ENCODE measurements at regions of chr17 and their contacts with region 1.

Region 1: DNA sequence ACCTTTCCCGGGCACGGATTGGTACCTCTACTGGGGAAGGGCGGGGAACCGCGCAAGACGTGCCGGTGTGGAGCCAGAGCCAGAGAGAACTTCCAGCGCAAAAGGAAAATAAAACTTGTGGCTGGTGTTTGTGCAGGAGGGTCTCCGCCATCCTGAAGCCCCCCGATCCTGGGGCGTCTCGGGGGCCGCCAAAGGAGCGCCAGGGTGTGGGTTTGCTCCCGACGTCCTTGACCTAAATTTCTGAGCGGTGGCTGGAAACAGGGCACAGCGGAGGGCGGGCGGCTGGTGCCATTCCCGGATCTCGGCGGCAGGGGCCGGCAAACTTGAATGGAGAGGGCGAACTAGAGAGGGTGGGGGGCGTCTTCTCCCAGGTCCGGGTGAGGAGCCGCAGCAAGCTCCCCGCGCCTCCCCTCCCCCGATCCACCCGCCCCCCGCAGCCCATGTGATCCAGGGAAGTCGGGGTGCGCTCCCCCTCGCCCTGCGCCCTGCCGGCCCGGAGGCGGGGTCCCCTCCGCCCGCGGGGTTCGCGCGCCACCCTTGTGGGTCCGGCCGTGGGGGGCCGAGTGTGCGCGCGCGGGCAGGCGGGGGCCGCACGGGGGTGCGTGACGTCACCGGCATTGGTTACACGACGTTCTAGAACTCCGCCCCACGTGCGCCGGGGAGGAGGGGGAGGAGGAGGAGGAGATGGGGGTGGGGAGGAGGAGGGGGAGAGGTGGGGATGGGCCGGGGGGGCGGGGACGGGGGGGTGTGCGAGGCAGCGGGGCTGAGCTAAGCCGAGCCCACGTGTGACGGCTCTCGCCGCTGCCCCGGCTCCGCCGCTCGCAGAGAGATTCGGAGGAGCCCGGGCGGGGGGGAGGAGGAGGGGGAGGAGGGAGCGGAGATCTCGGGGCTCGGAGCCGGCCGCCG is at the start of gene MSI2:
- DNase-seq: peak; percentile 93 to 96
- H3K4me3 ChIP-seq: peak within 1 kb of the TSS; percentile 82 to 91 (median 90)
- H3K27ac ChIP-seq: peak within 1 kb of the TSS; percentile 87 to 97 (median 94)
- H3K4me1 ChIP-seq: peaks cover 10 to 42% (median 26%) of the 10 kb centered on the region in 4 donors
- H3K27me3 ChIP-seq: no peaks in the 10 kb centered on the region
- CTCF ChIP-seq: no peak
- EP300 ChIP-seq: peak; percentile 32
- POLR2A ChIP-seq: no peak
- total RNA-seq, gene MSI2: 11.7 to 72.4 (median 30.8) TPM

Region 2: DNA sequence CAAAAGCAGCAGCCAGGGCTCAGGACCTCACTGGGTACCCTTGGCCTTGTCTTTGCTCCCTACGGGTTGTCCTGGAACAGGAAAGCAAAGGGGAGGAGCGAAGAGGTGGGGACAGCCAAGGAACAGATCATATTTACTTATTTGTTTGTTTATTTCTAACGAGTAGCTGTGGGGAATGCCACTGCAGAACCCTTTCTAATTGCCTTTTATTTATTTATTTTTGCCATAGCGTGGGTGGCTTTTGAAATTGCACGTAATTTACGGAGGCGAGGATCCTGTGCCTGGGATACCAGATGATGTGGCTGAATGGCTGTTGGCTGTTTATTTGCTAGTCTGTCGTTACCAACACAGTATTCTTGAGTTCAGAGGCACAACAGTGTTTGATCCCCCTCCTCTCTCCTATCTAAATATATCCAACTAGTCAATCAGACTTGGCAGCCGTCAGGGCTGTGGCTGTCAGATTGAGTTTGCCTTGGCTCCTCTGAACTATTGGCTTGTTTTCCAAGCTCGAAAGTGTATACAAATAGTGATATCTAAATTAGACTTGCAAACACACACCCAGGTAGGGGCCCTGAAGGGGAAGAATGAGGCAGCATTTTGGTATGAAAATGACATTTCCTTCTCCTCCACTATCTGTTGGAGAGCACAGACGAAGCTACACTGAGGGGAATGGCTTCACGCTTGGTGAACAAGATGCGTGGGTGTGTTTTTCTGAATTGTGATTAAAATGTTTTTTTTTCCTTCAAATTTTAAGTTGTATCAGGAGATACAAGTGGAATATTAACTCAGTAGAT is 110.7 kb after region 1 on chr17:
- intact Hi-C with region 1: loop called (anchors 10 kb)
- DNase-seq: peak; percentile 55 to 72
- H3K4me3 ChIP-seq: no peak overlapping the region
- H3K27ac ChIP-seq: no peak overlapping the region
- H3K4me1 ChIP-seq: peaks cover 11 to 47% (median 39%) of the 10 kb centered on the region in 4 donors
- H3K27me3 ChIP-seq: no peaks in the 10 kb centered on the region
- CTCF ChIP-seq: no peak
- EP300 ChIP-seq: no peak
- POLR2A ChIP-seq: no peak

Region 3: GRCh38 chr17:57440522-57441485 is 184.8 kb after region 1 on chr17:
- intact Hi-C with region 1: loop called (anchors 10 kb)
- DNase-seq: peak; percentile 60 to 90
- H3K4me3 ChIP-seq: no peak overlapping the region
- H3K27ac ChIP-seq: peak overlapping the region; percentile 10 to 69 (median 53)
- H3K4me1 ChIP-seq: peaks cover 20 to 54% (median 32%) of the 10 kb centered on the region in 4 donors
- H3K27me3 ChIP-seq: no peaks in the 10 kb centered on the region
- CTCF ChIP-seq: peak in 5 of 7 experiments; percentile 27 to 43 (median 38)
- EP300 ChIP-seq: no peak
- POLR2A ChIP-seq: no peak